ENCODE measurements at regions of chr1 and their contacts with region 1.

Region 1: GRCh38 chr1:46132529-46133180 is at the start of gene PIK3R3:
- DNase-seq: peak; percentile 98
- ATAC-seq: peak; percentile 96 to 98 (median 97)
- H3K4me3 ChIP-seq: peak within 1 kb of the TSS; percentile 51 to 89 (median 76)
- H3K27ac ChIP-seq: peak within 1 kb of the TSS; percentile 88 to 98 (median 96)
- H3K4me1 ChIP-seq: peaks cover 3 to 62% (median 42%) of the 10 kb centered on the region in 9 donors
- H3K27me3 ChIP-seq: peaks cover 0 to 39% (median 0%) of the 10 kb centered on the region in 7 donors
- CTCF ChIP-seq: peak in 4 of 9 donors; percentile 18 to 37 (median 24)
- total RNA-seq, gene PIK3R3: 22.9 to 54.5 (median 40.1) TPM

Region 2: GRCh38 chr1:46036894-46037839 is 95.5 kb before region 1 on chr1:
- intact Hi-C with region 1: loop called in 5 of 10 experiments (anchors 2 to 5 kb)
- DNase-seq: peak; percentile 82 to 89
- ATAC-seq: peak; percentile 42 to 81 (median 70)
- H3K4me3 ChIP-seq: no peak overlapping the region
- H3K27ac ChIP-seq: peak overlapping the region in 8 of 10 donors; percentile 2 to 46 (median 30)
- H3K4me1 ChIP-seq: peaks cover 8 to 64% (median 51%) of the 10 kb centered on the region in 9 donors
- H3K27me3 ChIP-seq: no peaks in the 10 kb centered on the region
- CTCF ChIP-seq: peak; percentile 96 to 98 (median 98)

Region 3: GRCh38 chr1:46043458-46044017 is 89.1 kb before region 1 on chr1:
- intact Hi-C with region 1: loop called in 5 of 10 experiments (anchors 2 to 5 kb)
- DNase-seq: no peak
- ATAC-seq: no peak
- H3K4me3 ChIP-seq: no peak overlapping the region
- H3K27ac ChIP-seq: no peak overlapping the region
- H3K4me1 ChIP-seq: peaks cover 9 to 52% (median 39%) of the 10 kb centered on the region in 9 donors
- H3K27me3 ChIP-seq: no peaks in the 10 kb centered on the region
- CTCF ChIP-seq: no peak

Region 4: DNA sequence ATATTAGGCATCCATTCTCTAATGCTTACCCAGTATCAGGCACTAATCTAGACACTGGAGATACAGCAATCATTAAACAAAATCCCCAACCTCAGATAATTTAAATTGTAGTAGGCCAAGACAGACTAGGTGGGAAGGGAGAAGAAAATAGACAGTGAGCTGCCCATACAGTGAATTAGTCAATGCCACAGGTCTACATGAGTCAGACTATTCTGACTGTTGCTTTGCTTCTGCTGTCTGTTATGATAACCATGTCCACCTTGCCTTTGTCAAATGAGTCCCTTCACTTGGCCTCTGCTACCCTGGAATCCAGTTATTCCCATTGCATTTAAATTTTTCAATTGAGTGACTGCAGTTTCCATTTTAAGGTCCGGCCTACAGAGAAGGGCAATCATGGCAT is 59.7 kb before region 1 on chr1:
- intact Hi-C with region 1: loop called in 1 of 10 experiments (anchors 2 kb)
- DNase-seq: no peak
- ATAC-seq: no peak
- H3K4me3 ChIP-seq: no peak overlapping the region
- H3K27ac ChIP-seq: no peak overlapping the region
- H3K4me1 ChIP-seq: peaks cover 0 to 33% (median 10%) of the 10 kb centered on the region in 9 donors
- H3K27me3 ChIP-seq: no peaks in the 10 kb centered on the region
- CTCF ChIP-seq: no peak

Region 5: DNA sequence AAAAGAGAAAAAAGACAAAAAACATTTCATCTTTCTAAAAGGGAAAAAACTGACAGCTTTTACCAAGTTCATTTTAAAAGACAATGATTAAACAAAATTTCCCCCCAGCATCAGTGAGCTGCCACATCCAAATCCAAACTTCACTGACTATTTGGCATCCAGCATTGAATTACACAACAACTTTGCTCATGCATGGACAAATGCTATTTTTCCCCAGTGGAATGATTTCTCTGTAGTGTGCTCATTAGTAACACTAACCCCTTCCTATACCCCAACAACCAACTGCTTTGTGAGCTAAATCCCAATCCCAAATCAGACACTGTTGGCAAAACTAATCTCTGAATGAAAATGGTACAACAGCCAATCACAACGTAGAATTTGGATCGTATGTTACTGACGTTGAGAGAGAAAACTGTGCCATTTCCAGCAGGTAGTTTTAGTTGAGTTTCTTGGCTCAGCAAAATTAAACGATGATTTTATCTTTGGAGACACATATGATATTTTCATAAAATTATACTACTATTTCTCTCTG is 38.1 kb before region 1 on chr1:
- intact Hi-C with region 1: loop called in 1 of 10 experiments (anchors 5 kb)
- DNase-seq: no peak
- ATAC-seq: no peak
- H3K4me3 ChIP-seq: no peak overlapping the region
- H3K27ac ChIP-seq: no peak overlapping the region
- H3K4me1 ChIP-seq: peaks cover 0 to 13% (median 4%) of the 10 kb centered on the region in 9 donors
- H3K27me3 ChIP-seq: no peaks in the 10 kb centered on the region
- CTCF ChIP-seq: no peak

Region 6: DNA sequence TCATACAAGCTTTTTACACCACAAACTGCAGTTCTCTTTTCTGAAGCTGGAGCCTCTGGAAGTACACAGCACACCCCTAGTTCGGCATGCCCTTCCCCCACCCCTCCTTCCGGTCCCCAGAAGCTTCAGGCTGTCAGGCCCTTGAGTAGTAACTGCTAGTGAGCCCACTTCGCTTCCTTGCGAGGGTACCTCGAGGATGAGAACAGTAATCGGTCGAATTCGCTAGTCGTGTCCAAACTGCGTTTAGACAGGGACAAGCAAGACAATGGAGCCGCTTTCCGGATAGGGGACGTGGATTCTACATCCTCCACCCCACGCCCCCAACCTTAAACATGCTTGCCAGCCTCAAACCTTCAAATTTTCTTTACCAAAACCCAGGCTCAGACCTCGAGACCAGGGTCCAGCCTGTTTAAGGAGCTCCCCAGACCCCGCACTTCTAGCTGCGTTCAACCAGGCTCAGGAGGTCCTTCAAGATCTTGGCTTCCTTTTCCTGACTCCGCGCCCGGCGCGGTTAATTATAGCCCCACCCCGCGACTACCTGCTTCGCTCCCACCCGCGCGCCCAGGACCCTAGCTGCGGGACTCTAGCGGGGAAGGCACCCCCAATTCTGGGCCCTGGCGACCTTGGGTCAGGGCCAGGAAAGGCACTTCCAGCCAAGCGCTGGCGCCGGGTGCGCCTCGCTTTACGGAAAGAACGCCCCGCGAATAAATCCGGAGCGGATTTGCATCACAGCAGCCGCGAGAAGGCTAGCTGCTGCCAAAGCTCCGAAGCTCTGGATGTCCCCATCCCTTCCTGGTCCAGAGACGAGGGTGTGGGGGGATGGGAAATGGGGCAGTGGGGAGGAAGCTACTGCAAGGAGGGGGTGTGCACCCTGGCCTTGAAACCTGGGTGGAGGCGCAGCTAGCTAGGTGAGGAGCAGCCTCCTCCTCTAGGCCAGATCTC is 34.1 kb after region 1 on chr1:
- intact Hi-C with region 1: loop called in 5 of 10 experiments (anchors 2 to 5 kb)
- DNase-seq: peak; percentile 74 to 86
- ATAC-seq: peak; percentile 72 to 91 (median 85)
- H3K4me3 ChIP-seq: peak overlapping the region; percentile 20 to 58 (median 52)
- H3K27ac ChIP-seq: peak overlapping the region; percentile 86 to 96 (median 92)
- H3K4me1 ChIP-seq: peaks cover 9 to 54% (median 39%) of the 10 kb centered on the region in 9 donors
- H3K27me3 ChIP-seq: peaks cover 0 to 26% (median 0%) of the 10 kb centered on the region in 7 donors
- CTCF ChIP-seq: no peak

Region 7: DNA sequence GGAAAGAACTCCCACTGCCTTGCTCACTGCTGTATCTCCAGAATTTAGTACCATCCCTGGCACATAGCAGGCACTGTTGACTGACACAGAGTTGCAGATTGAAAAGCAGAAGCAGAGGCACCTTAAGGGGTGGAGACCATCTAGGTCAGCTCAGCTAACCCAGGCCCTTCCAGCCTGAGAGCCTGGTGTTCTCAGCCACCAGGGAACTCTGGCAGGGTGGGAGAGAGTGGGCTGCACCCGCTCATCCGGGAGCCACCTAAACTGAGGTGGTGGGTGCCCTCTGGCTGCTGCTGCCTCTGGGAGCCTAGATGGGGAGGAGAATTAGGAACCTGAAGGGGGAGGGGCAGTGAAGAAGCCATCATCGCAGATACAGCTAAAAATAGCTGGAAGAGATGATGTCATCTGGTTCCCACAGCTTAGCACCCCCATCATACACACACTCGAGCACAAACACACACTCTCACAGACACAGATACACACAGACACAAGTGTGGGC is 40.8 kb after region 1 on chr1:
- intact Hi-C with region 1: loop called in 7 of 10 experiments (anchors 2 to 5 kb)
- DNase-seq: peak in 1 of 2 donors; percentile 65
- ATAC-seq: peak in 7 of 8 donors; percentile 6 to 56 (median 31)
- H3K4me3 ChIP-seq: no peak overlapping the region
- H3K27ac ChIP-seq: peak overlapping the region in 9 of 10 donors; percentile 60 to 93 (median 82)
- H3K4me1 ChIP-seq: peaks cover 22 to 67% (median 61%) of the 10 kb centered on the region in 9 donors
- H3K27me3 ChIP-seq: peaks cover 0 to under 1% (median 0%) of the 10 kb centered on the region in 7 donors
- CTCF ChIP-seq: peak in 6 of 9 donors; percentile 10 to 55 (median 34)